ENCODE measurements at regions of chr2 and their contacts with region 1.

Region 1: DNA sequence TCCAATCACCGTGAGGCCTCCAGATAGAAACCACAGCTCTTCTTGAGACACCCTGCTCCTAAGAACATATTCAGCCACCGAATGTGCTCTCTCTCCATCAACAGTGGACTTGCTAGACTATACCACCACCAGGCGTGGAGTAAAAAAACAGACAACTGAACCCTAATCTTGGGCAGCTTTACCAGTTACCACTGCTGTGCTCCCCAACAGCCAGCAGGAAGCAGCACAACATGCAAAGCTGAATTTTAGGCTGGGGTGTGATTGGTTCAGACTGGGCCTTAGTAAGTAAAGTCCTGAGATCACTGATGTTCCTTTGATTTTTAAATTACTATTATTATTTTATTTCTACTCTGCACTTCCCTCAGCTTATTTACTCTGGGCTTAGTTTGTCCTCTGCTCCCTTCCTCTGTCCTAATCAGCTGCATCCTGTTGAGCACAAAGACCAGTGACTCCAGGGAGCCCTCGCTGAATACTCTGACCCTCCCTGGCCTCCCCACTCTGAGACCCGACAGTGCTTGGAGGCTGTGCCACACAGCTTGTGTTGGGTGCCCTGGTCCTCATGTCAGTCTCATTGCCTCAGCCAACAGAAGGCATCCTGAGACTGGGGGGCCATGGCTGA is 21.9 kb downstream of the MRPL35 start:
- DNase-seq: peak in 4 of 5 donors; percentile 32 to 52 (median 41)
- H3K4me3 ChIP-seq: no peak overlapping the region
- H3K4me3 Mint-ChIP-seq: no peak overlapping the region
- H3K27ac ChIP-seq: no peak overlapping the region
- H3K27ac Mint-ChIP-seq: peak overlapping the region in 2 of 7 donors; percentile 8 to 67
- H3K4me1 ChIP-seq: peaks cover 4% of the 10 kb centered on the region
- H3K4me1 Mint-ChIP-seq: peaks cover 0 to 19% (median 8%) of the 10 kb centered on the region in 4 donors
- H3K27me3 ChIP-seq: no peaks in the 10 kb centered on the region
- H3K27me3 Mint-ChIP-seq: no peaks in the 10 kb centered on the region

Region 2: DNA sequence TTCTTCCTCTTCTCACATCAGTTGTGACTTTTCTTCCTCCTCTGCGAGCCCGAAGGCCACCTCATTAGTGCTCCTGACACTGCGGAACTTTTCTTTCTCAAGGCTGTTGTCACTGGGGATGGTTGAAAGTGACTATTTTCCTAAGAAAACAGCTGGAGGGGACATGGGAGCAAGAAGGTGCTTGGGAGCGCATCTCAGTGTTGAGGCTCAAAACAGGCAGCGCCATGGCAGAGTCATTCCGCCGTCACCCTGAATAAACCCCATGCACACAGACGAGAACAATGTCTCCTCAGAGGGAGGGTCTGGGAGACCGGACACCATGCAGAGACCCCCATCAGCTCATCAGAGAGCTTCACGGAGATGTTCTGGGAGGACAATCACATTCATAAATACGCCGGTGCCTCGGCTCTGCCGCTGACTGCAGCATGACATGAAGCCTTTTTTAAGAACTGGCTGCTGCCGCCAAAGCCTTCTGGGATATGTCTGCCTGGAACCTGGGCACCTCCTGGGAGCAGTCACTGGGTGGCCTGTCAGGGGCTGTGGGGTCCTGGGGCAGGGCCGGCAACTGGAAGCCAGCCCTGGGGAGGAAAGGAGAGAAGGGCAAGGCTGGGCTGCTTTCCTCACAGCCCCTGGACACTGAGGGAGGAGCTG is 448.2 kb before region 1 on chr2:
- CTCF ChIA-PET with region 1: no interaction called
- POLR2A ChIA-PET with region 1: no interaction called
- intact Hi-C with region 1: no loop called
- DNase-seq: no peak
- H3K4me3 ChIP-seq: no peak overlapping the region
- H3K4me3 Mint-ChIP-seq: no peak overlapping the region
- H3K27ac ChIP-seq: no peak overlapping the region
- H3K27ac Mint-ChIP-seq: no peak overlapping the region
- H3K4me1 ChIP-seq: no peaks in the 10 kb centered on the region
- H3K4me1 Mint-ChIP-seq: no peaks in the 10 kb centered on the region
- H3K27me3 ChIP-seq: no peaks in the 10 kb centered on the region
- H3K27me3 Mint-ChIP-seq: peaks cover 21 to 29% of the 10 kb centered on the region in 2 donors

Region 3: GRCh38 chr2:86048888-86049287 is 172.3 kb before region 1 on chr2:
- CTCF ChIA-PET with region 1: no interaction called
- POLR2A ChIA-PET with region 1: no interaction called
- intact Hi-C with region 1: no loop called
- DNase-seq: no peak
- H3K4me3 ChIP-seq: no peak overlapping the region
- H3K4me3 Mint-ChIP-seq: no peak overlapping the region
- H3K27ac ChIP-seq: no peak overlapping the region
- H3K27ac Mint-ChIP-seq: peak overlapping the region in 2 of 7 donors; percentile 37 to 72
- H3K4me1 ChIP-seq: no peaks in the 10 kb centered on the region
- H3K4me1 Mint-ChIP-seq: peaks cover 0 to 5% (median 0%) of the 10 kb centered on the region in 4 donors
- H3K27me3 ChIP-seq: no peaks in the 10 kb centered on the region
- H3K27me3 Mint-ChIP-seq: no peaks in the 10 kb centered on the region

Region 4: GRCh38 chr2:86201671-86202335 is 19.4 kb before region 1 on chr2:
- CTCF ChIA-PET with region 1: interaction called, 11 read pairs
- POLR2A ChIA-PET with region 1: interaction called, 3 read pairs
- intact Hi-C with region 1: no loop called
- DNase-seq: no peak
- H3K4me3 ChIP-seq: no peak overlapping the region
- H3K4me3 Mint-ChIP-seq: peak overlapping the region in 5 of 8 donors; percentile 10 to 43 (median 22)
- H3K27ac ChIP-seq: no peak overlapping the region
- H3K27ac Mint-ChIP-seq: peak overlapping the region in 4 of 7 donors; percentile 51 to 70 (median 56)
- H3K4me1 ChIP-seq: peaks cover 24% of the 10 kb centered on the region
- H3K4me1 Mint-ChIP-seq: peaks cover 27 to 49% (median 38%) of the 10 kb centered on the region in 4 donors
- H3K27me3 ChIP-seq: no peaks in the 10 kb centered on the region
- H3K27me3 Mint-ChIP-seq: no peaks in the 10 kb centered on the region

Region 5: GRCh38 chr2:86368161-86368824 is 147.1 kb after region 1 on chr2:
- CTCF ChIA-PET with region 1: interaction called, 29 read pairs
- POLR2A ChIA-PET with region 1: no interaction called
- intact Hi-C with region 1: loop called (anchors 2 kb)
- DNase-seq: peak; percentile 33 to 39 (median 37)
- H3K4me3 ChIP-seq: peak overlapping the region in 1 of 2 donors; percentile 35
- H3K4me3 Mint-ChIP-seq: peak overlapping the region; percentile 37 to 76 (median 72)
- H3K27ac ChIP-seq: no peak overlapping the region
- H3K27ac Mint-ChIP-seq: peak overlapping the region in 6 of 7 donors; percentile 14 to 75 (median 31)
- H3K4me1 ChIP-seq: peaks cover 35% of the 10 kb centered on the region
- H3K4me1 Mint-ChIP-seq: peaks cover 26 to 58% (median 45%) of the 10 kb centered on the region in 4 donors
- H3K27me3 ChIP-seq: no peaks in the 10 kb centered on the region
- H3K27me3 Mint-ChIP-seq: no peaks in the 10 kb centered on the region

Region 6: DNA sequence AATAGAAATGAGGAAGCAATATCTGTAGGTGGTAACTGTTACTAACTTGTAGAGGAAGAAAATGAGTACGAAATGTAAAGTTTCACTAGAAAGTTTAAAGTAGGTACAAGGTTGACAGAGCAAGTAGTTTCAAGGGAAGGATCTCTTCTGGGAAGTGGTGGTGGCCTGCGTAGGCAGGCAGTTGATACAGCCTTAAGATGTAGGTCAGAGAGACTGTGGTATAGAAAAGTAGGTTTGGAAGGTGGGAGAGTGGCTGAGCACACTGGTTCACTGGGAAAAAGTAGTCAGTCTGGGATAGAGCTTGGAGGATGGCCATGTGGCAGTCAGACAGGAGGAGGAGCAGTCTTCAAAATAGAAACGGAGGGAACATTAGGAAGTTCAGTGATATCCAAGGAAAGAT is 243.5 kb after region 1 on chr2:
- CTCF ChIA-PET with region 1: interaction called, 17 read pairs
- POLR2A ChIA-PET with region 1: no interaction called
- intact Hi-C with region 1: loop called (anchors 2 kb)
- DNase-seq: no peak
- H3K4me3 ChIP-seq: no peak overlapping the region
- H3K4me3 Mint-ChIP-seq: peak overlapping the region in 1 of 8 donors; percentile 38
- H3K27ac ChIP-seq: no peak overlapping the region
- H3K27ac Mint-ChIP-seq: peak overlapping the region; percentile 7 to 93 (median 72)
- H3K4me1 ChIP-seq: peaks cover 45% of the 10 kb centered on the region
- H3K4me1 Mint-ChIP-seq: peaks cover 40 to 59% (median 49%) of the 10 kb centered on the region in 4 donors
- H3K27me3 ChIP-seq: no peaks in the 10 kb centered on the region
- H3K27me3 Mint-ChIP-seq: no peaks in the 10 kb centered on the region

Region 7: DNA sequence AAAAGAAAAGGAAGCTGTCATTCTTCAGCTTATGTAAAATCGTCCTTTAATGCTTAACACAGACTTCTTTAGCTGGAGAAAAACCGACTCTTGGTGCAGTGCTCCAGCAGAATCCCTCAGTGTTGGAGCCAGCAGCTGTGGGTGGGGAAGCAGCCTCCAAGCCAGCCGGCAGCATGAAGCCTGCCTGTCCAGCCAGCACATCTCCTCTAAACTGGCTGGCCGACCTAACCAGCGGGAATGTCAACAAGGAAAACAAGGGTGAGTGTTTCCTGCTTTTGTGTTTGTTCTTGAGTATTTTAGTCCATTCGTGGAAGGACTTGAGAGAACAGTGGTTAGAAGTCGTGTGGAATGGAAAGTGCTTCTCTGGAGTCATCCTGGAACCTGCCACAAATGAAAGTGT is 258.9 kb after region 1 on chr2:
- CTCF ChIA-PET with region 1: interaction called, 10 read pairs
- POLR2A ChIA-PET with region 1: no interaction called
- intact Hi-C with region 1: no loop called
- DNase-seq: no peak
- H3K4me3 ChIP-seq: no peak overlapping the region
- H3K4me3 Mint-ChIP-seq: no peak overlapping the region
- H3K27ac ChIP-seq: no peak overlapping the region
- H3K27ac Mint-ChIP-seq: peak overlapping the region in 4 of 7 donors; percentile 23 to 53 (median 44)
- H3K4me1 ChIP-seq: no peaks in the 10 kb centered on the region
- H3K4me1 Mint-ChIP-seq: peaks cover 6 to 17% (median 15%) of the 10 kb centered on the region in 4 donors
- H3K27me3 ChIP-seq: no peaks in the 10 kb centered on the region
- H3K27me3 Mint-ChIP-seq: no peaks in the 10 kb centered on the region

Measured in CD4-positive, alpha-beta memory T cell (primary cell).